Activated B cell treated with CpG ODN at 0.5 μM for 24 hours (primary cell): ENCODE measurements at regions of chr6 and their contacts with region 1.

Region 1: DNA sequence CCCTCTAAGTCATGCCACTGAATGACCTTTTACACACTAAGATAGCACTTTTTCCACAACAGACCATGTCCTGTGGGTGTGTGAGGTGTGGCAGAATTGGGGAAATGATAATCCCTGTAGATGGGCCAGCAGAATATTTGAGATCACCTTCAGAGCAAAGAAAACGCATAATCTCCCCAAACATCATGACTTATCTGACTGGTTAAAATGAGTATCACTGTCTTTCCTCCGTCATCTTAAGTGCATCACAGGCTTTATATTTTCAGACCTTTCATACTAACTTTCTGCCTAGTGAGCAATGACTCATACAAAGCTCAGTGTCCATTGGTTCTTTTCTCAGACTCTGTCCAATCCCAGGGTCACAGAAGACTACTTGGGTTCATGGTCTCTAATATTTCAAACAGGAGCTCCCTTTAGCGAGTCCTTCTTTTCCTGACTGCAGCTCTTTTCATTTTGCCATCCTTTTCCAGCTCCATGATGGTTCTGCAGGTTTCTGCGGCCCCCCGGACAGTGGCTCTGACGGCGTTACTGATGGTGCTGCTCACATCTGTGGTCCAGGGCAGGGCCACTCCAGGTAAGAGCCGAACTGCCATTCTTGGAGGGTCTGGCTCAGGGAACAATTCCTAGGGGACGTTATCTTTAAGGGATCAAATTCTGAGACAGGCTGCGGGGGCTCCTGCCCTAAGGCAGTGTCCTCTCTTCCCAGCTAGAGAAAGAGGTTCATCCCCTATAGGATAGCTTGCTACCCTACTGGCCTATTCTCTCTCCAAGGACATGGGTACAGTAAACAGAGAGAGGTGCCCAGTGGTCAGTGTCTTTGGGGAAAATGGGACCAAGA is at the start of gene HLA-DPB1:
- DNase-seq: peak; percentile 42
- ATAC-seq: peak; percentile 76
- H3K4me3 Mint-ChIP-seq: peak within 1 kb of the TSS; percentile 95
- H3K27ac Mint-ChIP-seq: peak within 1 kb of the TSS; percentile 99
- H3K4me1 Mint-ChIP-seq: peaks cover 66% of the 10 kb centered on the region
- H3K27me3 Mint-ChIP-seq: no peaks in the 10 kb centered on the region
- CTCF ChIP-seq: no peak
- total RNA-seq, gene HLA-DPB1: 853 and 854 TPM in 2 replicates

Region 2: DNA sequence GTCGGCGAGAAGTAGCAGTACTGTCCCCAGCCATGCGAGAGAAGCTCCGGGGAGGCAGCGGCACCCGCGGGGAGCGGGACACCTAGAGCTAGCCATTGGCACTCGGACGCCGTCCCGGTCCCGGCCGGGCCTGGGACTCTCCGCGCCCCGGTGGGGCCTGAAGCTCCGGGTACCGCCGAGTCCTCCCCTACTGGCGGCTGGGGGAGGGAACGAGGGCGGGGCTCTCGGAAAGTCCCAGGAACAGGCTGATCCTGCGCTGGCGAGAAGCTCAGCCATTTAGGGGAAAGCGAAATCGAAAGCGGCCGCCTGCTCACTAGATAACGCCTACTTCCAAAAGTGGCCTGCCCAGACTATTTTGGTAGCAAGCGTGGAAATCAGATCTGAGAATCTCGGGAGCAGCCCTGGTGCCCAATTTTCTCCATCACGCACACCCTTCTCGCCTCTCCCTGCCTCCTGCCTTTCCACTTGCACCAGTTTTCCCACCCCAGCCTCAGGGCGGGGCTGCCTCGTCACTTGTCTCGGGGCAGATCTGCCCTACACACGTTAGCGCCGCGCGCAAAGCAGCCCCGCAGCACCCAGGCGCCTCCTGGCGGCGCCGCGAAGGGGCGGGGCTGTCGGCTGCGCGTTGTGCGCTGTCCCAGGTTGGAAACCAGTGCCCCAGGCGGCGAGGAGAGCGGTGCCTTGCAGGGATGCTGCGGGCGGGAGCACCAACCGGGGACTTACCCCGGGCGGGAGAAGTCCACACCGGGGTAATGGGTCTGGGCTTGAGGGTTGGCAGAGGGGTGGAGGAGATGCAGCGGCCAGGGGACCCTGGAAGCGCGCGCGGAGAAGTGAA is 222.0 kb before region 1 on chr6 and contains the starts of genes PSMB9 and TAP1:
- CTCF ChIA-PET with region 1: no interaction called
- POLR2A ChIA-PET with region 1: interaction called, 10 read pairs
- intact Hi-C with region 1: no loop called
- DNase-seq: peak; percentile 91
- ATAC-seq: peak; percentile 80
- H3K4me3 Mint-ChIP-seq: peak within 1 kb of the TSS; percentile 99
- H3K27ac Mint-ChIP-seq: peak within 1 kb of the TSS; percentile 98
- H3K4me1 Mint-ChIP-seq: peaks cover 77% of the 10 kb centered on the region
- H3K27me3 Mint-ChIP-seq: no peaks in the 10 kb centered on the region
- CTCF ChIP-seq: peak; percentile 20
- total RNA-seq, gene PSMB9: 198 and 223 TPM in 2 replicates
- total RNA-seq, gene TAP1: 148 and 151 TPM in 2 replicates

Region 3: DNA sequence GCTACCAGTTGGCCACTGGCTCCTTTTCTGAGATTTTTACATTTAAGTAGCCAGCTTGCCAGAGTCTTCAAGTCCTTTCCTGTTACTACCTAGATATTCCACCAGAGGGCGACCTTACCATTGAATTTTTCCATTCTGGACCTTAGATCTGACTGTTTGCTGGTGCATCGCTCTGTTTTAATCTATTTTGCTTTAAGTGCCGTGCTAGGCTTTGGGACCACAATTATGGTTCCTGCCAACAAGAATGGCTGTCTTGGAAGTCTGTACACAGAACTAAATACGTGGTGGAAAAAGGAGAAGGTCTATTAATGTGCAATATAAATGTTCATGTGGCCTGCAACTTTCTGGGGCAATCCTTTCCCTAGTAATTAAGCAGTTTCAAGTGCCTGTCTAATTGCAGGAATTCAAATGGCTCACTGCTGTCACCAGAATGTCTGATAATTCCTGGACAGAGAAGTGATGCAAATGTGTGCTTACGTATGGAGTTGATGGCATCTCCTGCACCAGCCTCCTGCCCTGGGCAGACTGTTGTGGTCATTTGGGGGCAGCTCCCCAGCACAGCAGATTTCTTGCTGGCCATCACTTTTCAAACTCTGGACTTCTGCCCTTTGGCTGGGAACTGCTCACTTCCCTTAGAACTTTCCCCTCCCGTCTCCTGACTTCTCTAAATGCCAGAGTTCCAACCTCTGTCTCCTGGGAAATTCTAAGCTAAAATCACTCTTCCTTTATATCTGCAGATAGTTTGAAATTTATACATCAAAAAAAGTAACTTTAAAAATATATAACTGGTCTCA is 60.7 kb before region 1 on chr6:
- CTCF ChIA-PET with region 1: interaction called, 240 read pairs
- POLR2A ChIA-PET with region 1: interaction called, 2,264 read pairs
- intact Hi-C with region 1: loop called (anchors 1 kb)
- DNase-seq: no peak
- ATAC-seq: peak; percentile 34
- H3K4me3 Mint-ChIP-seq: peak overlapping the region; percentile 71
- H3K27ac Mint-ChIP-seq: peak overlapping the region; percentile 98
- H3K4me1 Mint-ChIP-seq: peaks cover 69% of the 10 kb centered on the region
- H3K27me3 Mint-ChIP-seq: no peaks in the 10 kb centered on the region
- CTCF ChIP-seq: no peak

Region 4: GRCh38 chr6:33040157-33040556 is 35.6 kb before region 1 on chr6:
- CTCF ChIA-PET with region 1: no interaction called
- POLR2A ChIA-PET with region 1: interaction called, 16 read pairs
- intact Hi-C with region 1: no loop called
- DNase-seq: no peak
- ATAC-seq: no peak
- H3K4me3 Mint-ChIP-seq: no peak overlapping the region
- H3K27ac Mint-ChIP-seq: peak overlapping the region; percentile 53
- H3K4me1 Mint-ChIP-seq: peaks cover 10% of the 10 kb centered on the region
- H3K27me3 Mint-ChIP-seq: no peaks in the 10 kb centered on the region
- CTCF ChIP-seq: no peak

Region 5: DNA sequence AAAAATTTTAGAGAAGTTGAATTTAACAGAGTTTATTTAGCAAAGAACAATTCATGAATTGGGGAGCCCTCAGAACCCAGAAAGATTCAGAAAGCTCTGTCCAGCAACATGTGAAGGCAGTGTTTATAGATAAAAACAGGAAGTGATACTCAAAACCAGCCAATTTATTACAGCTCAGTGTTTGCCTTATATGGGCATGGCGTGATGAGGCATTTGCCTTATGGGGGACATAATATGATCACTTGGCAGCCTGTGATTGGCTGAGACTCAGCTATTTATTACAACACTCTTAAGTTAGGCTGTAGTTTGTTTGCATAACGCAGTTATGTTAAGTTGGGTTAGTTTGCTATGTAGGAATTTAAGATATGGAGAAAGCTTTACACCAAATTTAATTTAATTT is 13.8 kb before region 1 on chr6:
- CTCF ChIA-PET with region 1: no interaction called
- POLR2A ChIA-PET with region 1: interaction called, 75 read pairs
- intact Hi-C with region 1: loop called (anchors 1 kb)
- DNase-seq: no peak
- ATAC-seq: peak; percentile 72
- H3K4me3 Mint-ChIP-seq: peak overlapping the region; percentile 64
- H3K27ac Mint-ChIP-seq: peak overlapping the region; percentile 94
- H3K4me1 Mint-ChIP-seq: peaks cover 52% of the 10 kb centered on the region
- H3K27me3 Mint-ChIP-seq: no peaks in the 10 kb centered on the region
- CTCF ChIP-seq: no peak

Region 6: GRCh38 chr6:33112148-33112547 is 36.4 kb after region 1 on chr6:
- CTCF ChIA-PET with region 1: interaction called, 3 read pairs
- POLR2A ChIA-PET with region 1: interaction called, 13 read pairs
- intact Hi-C with region 1: loop called (anchors 5 kb)
- DNase-seq: no peak
- ATAC-seq: peak; percentile 94
- H3K4me3 Mint-ChIP-seq: peak overlapping the region; percentile 76
- H3K27ac Mint-ChIP-seq: peak overlapping the region; percentile 73
- H3K4me1 Mint-ChIP-seq: peaks cover 53% of the 10 kb centered on the region
- H3K27me3 Mint-ChIP-seq: peaks cover 3% of the 10 kb centered on the region
- CTCF ChIP-seq: no peak